GM10248 (cell line): ENCODE measurements at regions of chr17 and their contacts with region 1.

Region 1: DNA sequence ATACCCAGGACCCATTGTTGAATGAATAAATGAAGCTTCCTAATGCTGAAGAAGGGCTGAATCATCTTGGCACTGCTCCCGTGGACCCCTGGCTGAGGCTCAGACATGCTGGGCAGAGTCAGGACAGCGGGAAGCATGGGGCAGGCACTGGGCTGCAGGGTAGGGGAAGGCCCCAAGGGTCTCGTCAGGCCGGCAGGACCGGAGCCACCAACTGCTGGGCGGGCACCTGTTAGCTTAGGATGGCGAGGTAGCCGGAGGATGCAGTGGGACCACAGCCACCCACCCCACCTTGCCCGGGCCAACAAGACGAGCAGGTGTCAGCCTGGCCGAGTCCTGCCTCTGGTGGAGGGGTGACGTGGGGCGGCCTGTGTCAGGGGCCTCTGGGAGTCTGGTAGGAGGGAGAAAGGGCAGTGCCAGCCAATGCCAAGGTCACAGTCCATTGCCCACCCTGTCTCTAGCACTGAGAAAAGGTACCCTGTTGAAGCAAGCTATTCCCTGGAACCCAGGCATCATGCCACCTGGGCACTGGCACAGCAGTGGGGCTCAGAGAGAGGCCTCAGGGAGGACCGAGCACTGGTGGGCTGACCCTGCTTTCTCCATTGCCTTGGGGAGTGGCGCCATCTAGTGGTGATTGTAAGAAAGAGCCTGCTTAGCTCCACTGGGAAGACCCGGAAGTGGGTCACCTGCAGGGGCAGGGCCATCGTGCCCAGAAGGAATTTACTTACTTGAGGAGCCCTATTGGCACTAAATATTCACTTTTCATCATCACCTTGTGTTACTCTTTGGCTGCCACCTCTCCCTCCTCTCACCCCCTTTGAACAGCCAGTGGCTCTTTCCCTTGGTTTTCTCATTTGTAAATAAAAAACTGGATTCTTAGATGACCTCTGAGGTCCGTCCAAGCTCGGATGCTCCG is 3.0 kb upstream of the DLX3 start:
- DNase-seq: peak; percentile 90
- CTCF ChIP-seq: peak; percentile 85

Region 2: DNA sequence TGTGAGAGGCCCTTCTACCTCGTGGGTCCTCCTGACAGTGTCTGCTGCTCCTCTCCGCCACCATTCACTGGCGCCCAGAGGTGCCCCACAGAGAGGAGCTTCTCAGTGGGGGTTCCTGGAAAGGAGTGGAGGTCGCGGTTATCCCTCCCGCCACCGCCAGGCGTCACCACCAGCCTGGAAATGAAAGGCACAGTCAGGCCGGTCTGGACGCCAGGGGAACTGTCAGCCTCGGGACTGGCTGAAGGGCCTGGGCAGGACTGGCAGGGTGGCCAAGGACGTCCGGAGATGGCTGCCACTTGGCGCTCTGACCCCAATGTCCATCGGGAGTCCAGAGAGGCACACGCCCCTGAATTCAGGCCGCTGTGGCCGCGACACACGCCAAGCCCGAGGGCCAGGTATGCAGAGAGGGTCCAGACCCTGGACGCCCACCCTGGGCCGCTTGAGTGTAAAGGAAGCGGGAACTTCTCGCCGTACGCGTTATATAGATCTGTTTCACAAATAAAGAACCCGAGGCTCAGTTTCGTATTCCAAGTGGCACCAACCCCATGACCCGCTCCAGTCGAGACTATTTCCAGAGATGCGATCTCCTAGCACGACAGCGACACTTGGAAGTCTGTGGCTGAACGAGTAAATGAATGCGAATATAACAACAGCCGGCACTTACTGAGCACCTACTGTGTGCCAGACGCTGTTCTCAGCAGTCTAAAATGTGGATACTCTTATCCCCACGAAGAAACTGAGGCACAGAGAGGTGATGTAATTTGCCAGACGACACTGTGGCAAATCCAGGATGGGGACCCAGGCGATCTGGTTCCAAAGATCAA is 430.0 kb before region 1 on chr17:
- CTCF ChIA-PET with region 1: interaction called, 31 read pairs
- POLR2A ChIA-PET with region 1: no interaction called
- DNase-seq: peak; percentile 83
- CTCF ChIP-seq: peak; percentile 98

Region 3: DNA sequence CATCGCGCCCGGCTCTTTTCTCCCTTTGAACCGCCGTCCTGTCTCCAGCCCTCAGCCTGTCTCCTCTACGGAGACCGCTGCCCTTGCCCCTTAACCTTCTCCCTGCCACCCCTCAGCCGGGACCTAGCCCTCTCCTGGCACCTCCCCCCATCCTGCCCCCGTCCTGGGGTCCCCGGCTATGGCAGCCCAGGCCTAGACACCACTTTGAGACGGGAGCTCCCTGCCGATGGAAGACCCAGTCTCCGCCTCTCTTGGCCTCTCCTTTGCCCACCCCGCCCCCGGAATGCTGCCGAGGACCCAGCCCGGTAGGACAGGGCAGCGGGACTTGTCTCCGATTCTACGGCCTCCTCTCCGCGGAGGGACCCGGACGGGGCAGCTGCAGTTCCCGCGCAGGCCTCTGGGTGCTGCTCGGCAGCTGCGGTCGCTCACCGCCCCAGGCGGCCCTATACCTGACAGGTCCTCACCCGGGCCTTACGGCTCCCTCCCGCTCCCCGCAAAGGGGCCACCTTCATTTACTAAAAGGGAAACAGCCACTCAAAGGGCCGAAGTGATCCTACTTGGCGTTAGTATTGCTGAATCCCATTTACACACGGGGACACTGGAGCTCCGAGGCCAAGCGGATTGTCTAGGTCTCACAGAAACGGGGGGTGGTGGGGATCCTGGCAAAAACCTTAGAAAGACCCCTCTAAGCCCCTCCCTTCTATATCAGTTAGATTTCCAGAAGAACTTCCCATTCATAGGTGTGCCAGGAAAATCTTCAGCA is 117.6 kb before region 1 on chr17:
- CTCF ChIA-PET with region 1: interaction called, 100 read pairs
- POLR2A ChIA-PET with region 1: no interaction called
- DNase-seq: peak; percentile 93
- CTCF ChIP-seq: peak; percentile 87

Region 4: DNA sequence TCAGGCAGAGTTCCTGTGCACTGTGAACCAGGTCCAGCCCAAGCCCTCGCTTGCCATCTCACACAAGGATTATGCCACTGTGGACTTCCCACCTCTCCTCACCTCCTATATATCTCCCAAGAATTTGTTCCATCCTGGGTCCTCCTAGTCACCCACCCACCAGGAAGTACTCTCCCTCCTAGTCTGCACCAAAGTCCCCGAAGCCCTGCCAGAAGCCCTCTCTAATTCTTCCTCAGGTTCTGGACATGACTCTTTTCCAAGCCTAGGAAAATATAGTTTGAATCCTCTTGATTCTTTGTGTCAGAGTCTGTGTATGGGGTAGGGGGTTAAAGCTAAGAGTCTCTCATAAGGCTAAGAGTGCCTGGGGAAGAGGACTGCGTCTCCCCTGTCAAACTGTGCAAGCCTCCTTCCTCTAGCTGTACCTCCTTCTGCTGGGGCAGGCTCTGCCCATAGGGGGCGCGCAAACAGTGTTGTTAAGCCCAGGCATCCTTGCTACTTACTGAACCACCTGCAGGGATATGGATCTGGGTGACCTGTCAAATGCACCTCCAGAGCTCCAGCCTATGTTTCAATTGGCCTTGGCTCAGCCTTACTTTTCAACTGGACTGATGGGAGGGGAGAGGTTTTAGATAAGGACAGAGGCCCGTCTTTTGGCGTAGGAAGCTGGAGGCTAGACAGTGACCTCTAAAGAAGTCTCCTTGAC is 45.7 kb before region 1 on chr17:
- CTCF ChIA-PET with region 1: interaction called, 92 read pairs
- POLR2A ChIA-PET with region 1: no interaction called
- DNase-seq: peak; percentile 85
- CTCF ChIP-seq: peak; percentile 98

Region 5: DNA sequence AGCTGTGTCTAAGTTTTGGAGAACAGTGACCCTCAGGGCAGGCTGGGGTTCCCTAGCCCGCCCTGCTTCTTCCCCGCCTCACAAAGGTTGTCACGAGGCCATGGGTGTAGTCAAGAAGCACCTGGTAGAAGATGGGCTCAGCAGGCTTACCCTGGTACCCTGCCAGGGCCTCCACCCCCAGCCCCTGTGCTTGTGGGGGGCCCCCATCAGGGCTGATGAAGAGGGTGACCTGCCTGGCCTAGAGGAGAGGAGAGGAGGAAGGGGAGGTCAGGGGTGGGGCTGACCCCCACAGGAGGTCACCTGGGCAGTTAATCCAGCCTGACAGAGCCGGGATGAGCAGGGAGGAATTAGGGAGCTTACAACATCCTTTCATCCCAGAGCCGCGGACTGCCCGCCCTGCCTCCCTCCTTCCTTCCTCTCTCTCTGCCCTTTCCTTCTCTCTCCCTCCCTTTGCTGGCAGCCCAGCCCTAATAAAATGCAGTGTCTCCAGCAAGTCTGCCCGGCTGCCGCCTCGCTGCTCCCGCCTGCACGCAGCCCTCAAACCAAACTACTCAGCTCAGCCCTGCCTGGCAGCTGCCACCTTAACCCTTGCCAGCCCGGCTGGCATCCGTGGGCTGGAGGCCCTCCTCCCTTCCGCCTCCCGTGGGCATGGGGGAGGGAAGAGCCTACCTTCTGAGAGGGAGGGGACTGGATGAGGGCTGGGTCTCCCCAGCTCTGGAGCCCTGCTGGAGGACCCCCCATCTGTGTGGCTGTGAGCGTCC is 10.2 kb before region 1 on chr17:
- CTCF ChIA-PET with region 1: interaction called, 51 read pairs
- POLR2A ChIA-PET with region 1: no interaction called
- DNase-seq: no peak
- CTCF ChIP-seq: no peak

Region 6: DNA sequence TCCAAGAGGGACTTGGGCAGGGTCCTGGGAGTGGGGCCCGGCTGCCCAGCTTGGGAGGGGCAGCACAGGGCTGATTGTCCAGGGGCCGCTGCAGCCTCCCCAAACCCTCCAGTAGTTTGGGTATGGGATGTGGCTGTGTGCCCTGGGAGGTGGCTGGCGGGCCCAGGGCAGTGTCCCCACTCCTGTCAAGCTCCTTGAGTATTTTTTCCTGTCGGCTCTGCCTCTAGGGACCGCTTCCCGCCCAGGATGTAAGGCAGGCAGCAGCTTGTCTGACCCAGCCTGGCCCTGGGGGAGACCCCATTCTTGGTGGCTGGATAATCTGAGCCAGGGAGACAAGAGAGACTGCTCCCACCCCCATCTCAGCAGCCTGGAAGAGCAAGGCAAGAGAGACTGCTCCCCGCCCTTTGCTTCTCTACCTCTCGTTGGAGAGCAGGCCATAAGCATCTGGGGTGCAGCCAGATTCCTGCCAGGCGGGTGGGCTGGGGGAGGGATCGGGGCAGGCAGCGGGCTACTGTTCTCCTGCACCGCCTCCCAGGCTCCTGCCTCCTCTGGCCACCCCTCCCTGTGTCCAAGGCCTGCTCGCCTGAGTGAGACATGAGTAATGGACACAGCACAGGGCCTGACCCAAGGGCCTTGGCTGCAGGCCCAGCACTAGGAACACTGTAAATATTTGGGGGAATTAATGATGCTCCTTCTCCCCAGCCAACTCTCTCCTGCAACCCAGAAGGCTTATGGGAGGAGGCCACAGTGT is 39.4 kb after region 1 on chr17:
- CTCF ChIA-PET with region 1: interaction called, 27 read pairs
- POLR2A ChIA-PET with region 1: no interaction called
- DNase-seq: no peak
- CTCF ChIP-seq: no peak

Region 7: DNA sequence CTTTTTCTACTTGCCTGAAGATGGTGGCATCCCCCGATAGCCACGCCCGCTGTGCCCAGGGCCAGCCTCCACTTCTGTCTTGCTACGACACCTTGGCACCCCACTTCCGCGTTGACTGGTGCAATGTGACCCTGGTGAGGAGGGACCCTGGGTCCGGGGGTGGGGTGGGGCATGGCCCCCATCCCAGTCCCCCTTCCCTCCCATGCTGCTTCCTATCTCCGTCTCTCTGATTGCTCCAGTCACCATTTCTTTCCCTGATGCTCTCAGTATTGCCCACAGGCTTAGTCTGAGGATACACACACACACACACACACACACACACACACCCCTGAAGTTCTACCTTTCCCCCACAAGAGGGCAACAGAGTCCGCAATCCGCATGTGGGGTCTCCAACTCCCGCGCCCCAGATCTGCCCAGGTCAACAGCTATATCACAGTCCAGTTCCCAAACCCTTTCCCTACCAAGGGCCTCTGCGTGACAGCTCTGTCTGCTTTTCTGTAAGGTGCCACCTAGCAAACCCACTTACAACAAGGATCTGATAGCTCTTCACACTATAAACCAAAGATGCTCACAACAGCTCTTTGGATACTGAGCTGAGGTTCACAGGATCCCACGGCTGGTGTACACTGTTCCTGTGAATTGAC is 171.2 kb after region 1 on chr17:
- CTCF ChIA-PET with region 1: no interaction called
- POLR2A ChIA-PET with region 1: no interaction called
- DNase-seq: peak; percentile 75
- CTCF ChIP-seq: peak; percentile 84

Region 8: DNA sequence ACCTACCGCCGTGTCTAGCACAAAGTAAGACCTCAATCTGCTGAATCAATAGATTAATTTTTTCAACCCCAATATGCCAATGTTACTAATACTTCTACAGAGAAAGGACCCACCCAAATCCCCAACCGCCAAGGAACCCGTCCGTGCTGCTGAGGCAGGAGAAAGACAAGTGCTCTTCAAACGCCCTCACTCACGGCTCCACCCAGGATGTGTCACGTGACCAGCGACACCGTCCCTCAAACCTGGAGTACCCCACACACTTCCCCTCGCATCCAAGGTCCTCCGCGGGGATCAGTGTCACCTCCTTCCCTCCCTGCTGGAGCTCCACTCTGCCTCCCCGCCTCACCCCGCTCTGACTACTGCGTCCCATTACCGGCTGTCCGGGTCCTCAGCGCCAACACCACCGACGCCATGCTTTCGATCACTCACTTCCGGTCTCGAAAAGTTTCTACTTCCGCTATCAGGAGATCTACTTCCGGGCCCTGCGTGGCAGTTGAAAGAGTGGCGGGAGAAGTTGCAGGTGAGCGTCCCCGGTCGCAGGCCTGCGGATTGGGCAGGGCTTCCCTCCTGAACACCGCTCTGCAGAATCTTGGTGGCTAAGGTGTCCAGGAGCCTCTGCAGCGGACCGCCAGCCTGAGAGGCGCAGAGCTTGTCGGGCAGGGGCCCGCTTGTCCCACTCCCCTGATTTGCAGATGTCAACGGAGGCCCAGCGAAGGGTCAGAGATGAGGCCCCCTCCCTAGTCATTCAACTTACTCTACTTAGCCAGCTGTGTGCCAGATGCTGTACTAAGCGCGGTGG is 374.9 kb after region 1 on chr17 and contains the starts of genes EME1 and MRPL27:
- CTCF ChIA-PET with region 1: no interaction called
- POLR2A ChIA-PET with region 1: no interaction called
- DNase-seq: peak; percentile 92
- CTCF ChIP-seq: no peak